Activated CD8-positive, alpha-beta T cell treated with anti-CD3 and anti-CD28 coated beads, Interleukin-2, amount 10 ng/mL, durations not matched to agents 7 days and 5 days (primary cell): ENCODE measurements at regions of chr6 and their contacts with region 1.

Region 1: GRCh38 chr6:38871741-38872568 is 156.8 kb downstream of the DNAH8 start:
- DNase-seq: peak; percentile 68
- ATAC-seq: no peak
- H3K4me3 Mint-ChIP-seq: no peak overlapping the region
- H3K27ac Mint-ChIP-seq: no peak overlapping the region
- H3K4me1 Mint-ChIP-seq: peaks cover 25% of the 10 kb centered on the region
- H3K27me3 Mint-ChIP-seq: peaks cover 7% of the 10 kb centered on the region

Region 2: GRCh38 chr6:38843798-38844197 is 28.2 kb before region 1 on chr6:
- CTCF ChIA-PET with region 1: no interaction called
- POLR2A ChIA-PET with region 1: no interaction called
- DNase-seq: no peak
- ATAC-seq: no peak
- H3K4me3 Mint-ChIP-seq: no peak overlapping the region
- H3K27ac Mint-ChIP-seq: no peak overlapping the region
- H3K4me1 Mint-ChIP-seq: no peaks in the 10 kb centered on the region
- H3K27me3 Mint-ChIP-seq: peaks cover 23% of the 10 kb centered on the region

Region 3: DNA sequence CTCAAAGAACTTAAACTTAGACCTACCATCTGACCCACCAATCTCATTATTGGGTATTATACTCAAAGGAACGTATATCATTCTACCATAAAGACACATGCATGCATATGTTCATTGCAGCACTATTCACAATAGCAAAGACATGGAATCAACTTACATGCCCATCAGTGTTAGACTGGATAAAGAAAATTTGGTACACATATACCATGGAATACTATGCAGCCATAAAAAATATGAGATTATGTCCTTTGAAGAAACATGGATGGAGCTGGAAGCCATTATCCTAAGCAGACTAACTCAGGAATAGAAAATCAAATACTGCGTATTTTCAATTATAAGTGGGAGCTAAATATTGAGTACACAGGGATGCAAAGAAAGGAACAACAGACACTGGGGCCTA is 10.2 kb after region 1 on chr6:
- CTCF ChIA-PET with region 1: interaction called, 12 read pairs
- POLR2A ChIA-PET with region 1: no interaction called
- DNase-seq: no peak
- ATAC-seq: no peak
- H3K4me3 Mint-ChIP-seq: no peak overlapping the region
- H3K27ac Mint-ChIP-seq: no peak overlapping the region
- H3K4me1 Mint-ChIP-seq: no peaks in the 10 kb centered on the region
- H3K27me3 Mint-ChIP-seq: no peaks in the 10 kb centered on the region

Region 4: GRCh38 chr6:38933432-38933831 is 61.5 kb after region 1 on chr6:
- CTCF ChIA-PET with region 1: interaction called, 11 read pairs
- POLR2A ChIA-PET with region 1: no interaction called
- DNase-seq: no peak
- ATAC-seq: no peak
- H3K4me3 Mint-ChIP-seq: no peak overlapping the region
- H3K27ac Mint-ChIP-seq: no peak overlapping the region
- H3K4me1 Mint-ChIP-seq: no peaks in the 10 kb centered on the region
- H3K27me3 Mint-ChIP-seq: peaks cover 21% of the 10 kb centered on the region

Region 5: GRCh38 chr6:38973178-38974054 is 101.5 kb after region 1 on chr6:
- CTCF ChIA-PET with region 1: interaction called, 13 read pairs
- POLR2A ChIA-PET with region 1: no interaction called
- DNase-seq: peak; percentile 48
- ATAC-seq: peak; percentile 74
- H3K4me3 Mint-ChIP-seq: no peak overlapping the region
- H3K27ac Mint-ChIP-seq: no peak overlapping the region
- H3K4me1 Mint-ChIP-seq: no peaks in the 10 kb centered on the region
- H3K27me3 Mint-ChIP-seq: peaks cover 33% of the 10 kb centered on the region

Region 6: DNA sequence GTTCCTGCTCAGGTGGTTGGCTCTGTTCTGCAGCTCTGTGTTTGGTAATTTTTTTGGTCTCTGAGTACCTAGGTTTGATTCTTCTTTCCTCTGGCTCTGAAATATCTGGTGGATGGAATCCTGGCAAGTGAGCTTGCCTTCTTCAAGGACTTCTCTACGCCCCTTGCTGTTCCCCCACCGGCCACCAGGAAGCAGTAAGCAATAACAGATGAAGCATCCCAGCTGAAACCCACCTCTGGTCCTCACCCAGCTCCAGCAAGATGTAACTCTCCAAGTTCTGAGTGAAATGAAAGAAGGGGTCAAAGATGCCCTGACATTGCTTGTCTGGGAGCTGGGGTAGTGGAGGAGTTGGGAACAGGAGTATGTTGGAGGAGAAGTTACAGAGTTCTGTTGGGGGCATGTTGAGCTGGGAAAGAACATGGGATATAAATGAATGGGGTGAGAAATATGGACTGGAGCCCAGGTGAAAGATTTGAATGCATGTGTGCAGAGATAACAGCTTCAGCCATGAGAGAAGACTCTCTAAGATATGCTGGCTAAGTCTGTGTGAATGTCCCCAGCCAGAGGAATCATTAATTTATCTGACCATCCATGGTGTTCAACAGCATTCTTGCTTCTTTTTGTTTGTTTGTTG is 125.3 kb after region 1 on chr6:
- CTCF ChIA-PET with region 1: interaction called, 20 read pairs
- POLR2A ChIA-PET with region 1: no interaction called
- DNase-seq: peak; percentile 35
- ATAC-seq: no peak
- H3K4me3 Mint-ChIP-seq: no peak overlapping the region
- H3K27ac Mint-ChIP-seq: no peak overlapping the region
- H3K4me1 Mint-ChIP-seq: no peaks in the 10 kb centered on the region
- H3K27me3 Mint-ChIP-seq: peaks cover 41% of the 10 kb centered on the region